MCF 10A (cell line): ENCODE measurements at regions of chr4 and their contacts with region 1.

Region 1: DNA sequence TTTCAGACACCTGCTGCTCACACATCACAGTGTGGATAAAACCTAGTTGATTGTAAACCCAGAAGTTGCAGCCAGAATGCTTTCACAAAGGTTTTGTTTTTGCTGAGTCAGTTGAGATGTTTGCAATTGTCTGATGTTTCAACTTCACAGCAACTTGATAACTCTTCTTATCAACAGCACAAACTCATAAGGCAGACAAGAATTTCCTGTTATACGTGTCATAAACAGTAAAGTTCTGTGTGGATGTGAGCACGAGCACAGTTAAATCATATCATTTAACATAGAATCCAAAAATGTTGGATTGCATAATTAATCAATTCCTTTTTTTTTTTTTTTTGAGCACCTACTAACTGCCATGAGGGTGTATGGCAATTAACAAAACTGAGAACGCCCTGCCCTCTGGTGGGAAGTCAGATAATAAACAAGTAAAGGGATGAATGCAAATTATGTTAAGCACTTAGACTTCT is 512.2 kb downstream of the PDHA2 start:
- DNase-seq: peak; percentile 60
- H3K4me3 Mint-ChIP-seq: no peak overlapping the region
- H3K27ac Mint-ChIP-seq: no peak overlapping the region
- H3K4me1 Mint-ChIP-seq: peaks cover 8% of the 10 kb centered on the region
- H3K27me3 Mint-ChIP-seq: no peaks in the 10 kb centered on the region
- CTCF ChIP-seq: peak; percentile 37

Region 2: GRCh38 chr4:95165926-95166524 is 1186.1 kb before region 1 on chr4:
- CTCF ChIA-PET with region 1: interaction called, 15 read pairs
- POLR2A ChIA-PET with region 1: no interaction called
- intact Hi-C with region 1: loop called (anchors 1 kb)
- DNase-seq: peak; percentile 74
- H3K4me3 Mint-ChIP-seq: no peak overlapping the region
- H3K27ac Mint-ChIP-seq: no peak overlapping the region
- H3K4me1 Mint-ChIP-seq: no peaks in the 10 kb centered on the region
- H3K27me3 Mint-ChIP-seq: no peaks in the 10 kb centered on the region
- CTCF ChIP-seq: peak; percentile 66

Region 3: DNA sequence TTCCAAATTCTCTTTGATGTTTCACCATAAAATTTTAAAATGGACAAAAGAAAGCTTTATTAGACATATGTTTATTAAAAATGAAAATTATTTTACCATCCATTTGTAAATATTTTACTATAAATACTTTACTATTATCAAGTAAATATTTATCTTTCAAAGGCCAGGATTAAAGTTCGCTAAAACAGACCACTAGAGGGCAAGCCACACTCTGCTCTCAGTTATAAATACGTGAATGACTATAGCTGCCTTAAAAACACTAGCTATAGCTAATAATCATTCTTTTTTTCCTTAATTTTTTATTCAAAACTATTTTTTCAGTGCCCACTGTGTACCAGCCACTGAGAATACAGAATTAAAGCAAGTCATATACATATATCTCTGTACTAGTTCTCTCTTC is 841.9 kb before region 1 on chr4:
- CTCF ChIA-PET with region 1: interaction called, 17 read pairs
- POLR2A ChIA-PET with region 1: interaction called, 3 read pairs
- intact Hi-C with region 1: loop called (anchors 1 kb)
- DNase-seq: peak; percentile 46
- H3K4me3 Mint-ChIP-seq: no peak overlapping the region
- H3K27ac Mint-ChIP-seq: no peak overlapping the region
- H3K4me1 Mint-ChIP-seq: peaks cover 17% of the 10 kb centered on the region
- H3K27me3 Mint-ChIP-seq: no peaks in the 10 kb centered on the region
- CTCF ChIP-seq: peak; percentile 59

Region 4: DNA sequence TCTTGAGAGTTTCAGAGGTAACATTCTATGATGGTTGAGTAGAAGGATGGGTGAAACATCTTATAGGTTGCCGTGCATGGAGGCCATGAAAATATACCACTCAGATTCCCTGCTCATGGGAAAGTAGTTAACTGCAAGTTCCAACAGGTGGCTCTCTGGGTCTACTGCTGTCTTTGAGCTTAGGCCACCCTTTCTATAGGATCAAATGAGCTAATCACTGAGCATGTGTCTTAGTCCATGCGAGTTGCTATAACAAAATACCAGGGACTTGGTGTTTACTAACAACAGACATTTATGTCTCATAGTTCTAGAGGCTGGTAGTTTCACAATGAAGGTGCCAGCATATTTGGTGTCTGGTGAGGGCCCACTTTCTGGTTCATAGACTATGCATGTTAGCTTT is 658.5 kb before region 1 on chr4:
- CTCF ChIA-PET with region 1: interaction called, 3 read pairs
- POLR2A ChIA-PET with region 1: no interaction called
- intact Hi-C with region 1: loop called (anchors 1 kb)
- DNase-seq: peak; percentile 50
- H3K4me3 Mint-ChIP-seq: no peak overlapping the region
- H3K27ac Mint-ChIP-seq: no peak overlapping the region
- H3K4me1 Mint-ChIP-seq: peaks cover 6% of the 10 kb centered on the region
- H3K27me3 Mint-ChIP-seq: no peaks in the 10 kb centered on the region
- CTCF ChIP-seq: peak; percentile 25

Region 5: GRCh38 chr4:95889662-95890061 is 462.4 kb before region 1 on chr4:
- CTCF ChIA-PET with region 1: no interaction called
- POLR2A ChIA-PET with region 1: no interaction called
- intact Hi-C with region 1: no loop called
- DNase-seq: peak; percentile 32
- H3K4me3 Mint-ChIP-seq: no peak overlapping the region
- H3K27ac Mint-ChIP-seq: no peak overlapping the region
- H3K4me1 Mint-ChIP-seq: no peaks in the 10 kb centered on the region
- H3K27me3 Mint-ChIP-seq: no peaks in the 10 kb centered on the region
- CTCF ChIP-seq: no peak

Region 6: DNA sequence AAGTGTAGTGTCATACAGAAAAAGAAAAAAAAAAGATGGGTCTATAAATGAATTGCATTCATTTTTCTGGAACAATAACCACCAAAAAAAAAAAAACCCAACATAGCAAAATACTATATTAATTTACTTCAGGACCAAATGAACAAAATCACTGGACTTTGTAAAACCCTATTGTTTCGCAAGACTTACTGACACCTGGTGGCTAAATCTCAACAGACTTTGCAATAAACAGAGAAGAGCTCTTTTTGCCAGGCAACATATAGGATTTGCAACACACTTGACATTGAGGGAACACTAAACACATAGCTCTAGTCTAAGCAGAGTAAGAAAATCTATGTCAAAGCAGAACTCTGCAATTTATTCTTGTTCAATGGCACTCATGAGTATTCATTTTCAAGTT is 801.0 kb after region 1 on chr4:
- CTCF ChIA-PET with region 1: no interaction called
- POLR2A ChIA-PET with region 1: no interaction called
- intact Hi-C with region 1: loop called (anchors 10 kb)
- DNase-seq: peak; percentile 42
- H3K4me3 Mint-ChIP-seq: no peak overlapping the region
- H3K27ac Mint-ChIP-seq: no peak overlapping the region
- H3K4me1 Mint-ChIP-seq: peaks cover 6% of the 10 kb centered on the region
- H3K27me3 Mint-ChIP-seq: no peaks in the 10 kb centered on the region
- CTCF ChIP-seq: peak; percentile 29

Region 7: DNA sequence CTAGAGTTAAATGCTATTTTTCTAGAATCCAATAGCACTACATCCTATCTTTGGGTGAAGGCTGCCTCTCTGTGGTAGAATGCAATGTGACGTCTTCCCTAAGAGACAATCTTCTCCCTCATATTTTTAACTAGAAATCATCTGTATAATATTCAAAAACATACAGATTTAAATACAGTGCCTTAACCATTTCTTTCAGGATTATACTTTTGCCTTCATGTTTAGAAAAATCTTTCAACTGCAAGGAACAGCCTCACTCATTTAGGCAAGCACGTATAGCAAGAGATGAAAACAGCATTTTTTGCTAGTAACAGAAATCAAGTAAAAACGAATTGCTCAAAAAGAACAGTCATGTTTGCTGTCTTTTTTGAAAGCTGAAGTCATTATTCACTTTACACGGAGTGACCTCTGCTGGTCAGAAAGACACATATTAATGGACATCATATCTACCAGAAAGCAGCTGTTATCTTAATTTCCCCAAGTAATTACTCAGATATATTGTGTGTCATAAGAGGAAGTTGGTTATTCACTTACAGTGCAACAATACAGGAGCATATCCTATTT is 1368.9 kb after region 1 on chr4:
- CTCF ChIA-PET with region 1: no interaction called
- POLR2A ChIA-PET with region 1: no interaction called
- intact Hi-C with region 1: loop called (anchors 2 kb)
- DNase-seq: peak; percentile 62
- H3K4me3 Mint-ChIP-seq: no peak overlapping the region
- H3K27ac Mint-ChIP-seq: peak overlapping the region; percentile 2
- H3K4me1 Mint-ChIP-seq: no peaks in the 10 kb centered on the region
- H3K27me3 Mint-ChIP-seq: no peaks in the 10 kb centered on the region
- CTCF ChIP-seq: peak; percentile 36

Region 8: GRCh38 chr4:97987019-97987648 is 1635.0 kb after region 1 on chr4:
- CTCF ChIA-PET with region 1: no interaction called
- POLR2A ChIA-PET with region 1: no interaction called
- intact Hi-C with region 1: loop called (anchors 2 kb)
- DNase-seq: peak; percentile 49
- H3K4me3 Mint-ChIP-seq: no peak overlapping the region
- H3K27ac Mint-ChIP-seq: no peak overlapping the region
- H3K4me1 Mint-ChIP-seq: no peaks in the 10 kb centered on the region
- H3K27me3 Mint-ChIP-seq: no peaks in the 10 kb centered on the region
- CTCF ChIP-seq: peak; percentile 47